Right ventricle myocardium inferior (tissue), 1 donor: ENCODE measurements at regions of chr1 and their contacts with region 1.

Region 1: DNA sequence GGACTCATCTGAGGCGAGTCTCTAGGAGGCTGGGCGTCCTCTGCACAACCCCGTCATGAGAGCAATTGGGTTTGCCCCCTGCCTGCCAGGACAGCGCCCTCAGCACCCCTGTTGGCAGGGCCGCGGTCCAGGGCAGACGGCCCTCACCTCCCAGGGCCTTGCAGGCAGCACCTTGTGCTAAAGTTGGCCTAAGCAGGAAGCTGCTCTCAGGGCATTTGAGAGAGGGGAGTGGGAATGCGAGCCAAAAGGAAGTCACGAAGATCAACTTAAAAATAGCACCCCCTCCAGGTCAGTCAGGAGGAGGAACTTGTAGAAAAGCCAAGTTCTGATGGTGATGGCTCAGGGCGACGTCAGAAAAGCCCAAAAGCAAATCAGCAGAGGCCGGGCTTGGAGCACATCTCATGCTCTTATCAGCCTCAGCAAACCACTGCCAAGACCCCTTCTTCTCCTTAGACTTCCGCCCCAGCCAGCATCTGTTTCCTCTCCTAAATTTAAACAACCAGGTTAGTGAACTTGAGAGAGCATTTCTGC is 12.6 kb upstream of the ADORA3 start:
- DNase-seq: peak; percentile 81
- ATAC-seq: peak; percentile 71

Region 2: DNA sequence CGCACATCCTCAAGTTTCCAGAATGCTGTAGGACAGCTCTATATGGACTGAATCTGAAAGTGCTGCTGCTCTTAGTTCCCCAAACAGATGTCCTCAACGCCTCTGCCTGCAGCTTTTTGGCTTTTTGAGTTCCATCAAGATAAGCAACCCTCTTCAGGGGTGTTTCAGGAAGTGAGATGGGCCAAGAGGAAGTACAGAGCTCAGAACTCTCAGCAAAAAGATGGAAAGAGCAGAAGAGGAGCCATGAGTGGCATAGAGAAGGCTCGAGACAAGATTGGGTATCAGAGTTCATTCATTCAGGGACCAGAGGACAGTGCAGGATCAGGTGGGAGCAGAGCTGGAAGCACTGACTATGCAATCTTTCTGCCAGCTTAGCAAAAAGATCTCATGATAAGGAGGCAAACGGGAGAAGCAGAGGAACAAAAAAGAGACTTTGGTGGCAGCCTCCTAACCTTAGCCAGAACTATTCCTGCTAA is 12.4 kb before region 1 on chr1 and contains the starts of genes ADORA3 and TMIGD3:
- intact Hi-C with region 1: no loop called
- DNase-seq: no peak
- ATAC-seq: no peak
- total RNA-seq, gene ADORA3: 3.8 TPM
- total RNA-seq, gene TMIGD3: 1.7 TPM

Region 3: DNA sequence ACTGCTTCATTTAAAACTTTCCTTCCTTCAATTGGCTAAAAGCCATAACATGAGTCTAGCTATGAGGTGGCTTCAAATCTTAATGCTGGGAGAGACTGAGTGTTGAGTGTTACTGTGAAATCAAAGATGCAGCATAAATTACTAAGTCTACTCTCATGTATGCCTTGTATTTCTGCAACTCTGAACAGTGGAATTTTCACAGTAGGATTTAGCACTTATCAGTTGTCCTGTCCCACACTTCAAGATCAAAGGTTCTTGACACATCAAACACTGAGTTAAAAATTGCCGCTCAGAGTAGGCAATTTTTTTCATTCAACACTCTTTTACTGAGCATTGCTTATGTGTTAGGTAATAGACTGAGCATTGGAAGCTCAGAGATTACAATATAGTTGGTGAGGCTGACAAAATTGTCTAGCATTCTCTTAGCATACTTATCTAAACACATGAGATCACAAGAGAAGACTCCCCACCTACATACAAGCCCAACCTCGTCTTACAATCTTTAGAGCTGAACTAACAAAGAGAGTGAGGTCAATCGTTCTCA is 43.7 kb after region 1 on chr1:
- intact Hi-C with region 1: loop called (anchors 5 kb)
- DNase-seq: no peak
- ATAC-seq: no peak

Region 4: DNA sequence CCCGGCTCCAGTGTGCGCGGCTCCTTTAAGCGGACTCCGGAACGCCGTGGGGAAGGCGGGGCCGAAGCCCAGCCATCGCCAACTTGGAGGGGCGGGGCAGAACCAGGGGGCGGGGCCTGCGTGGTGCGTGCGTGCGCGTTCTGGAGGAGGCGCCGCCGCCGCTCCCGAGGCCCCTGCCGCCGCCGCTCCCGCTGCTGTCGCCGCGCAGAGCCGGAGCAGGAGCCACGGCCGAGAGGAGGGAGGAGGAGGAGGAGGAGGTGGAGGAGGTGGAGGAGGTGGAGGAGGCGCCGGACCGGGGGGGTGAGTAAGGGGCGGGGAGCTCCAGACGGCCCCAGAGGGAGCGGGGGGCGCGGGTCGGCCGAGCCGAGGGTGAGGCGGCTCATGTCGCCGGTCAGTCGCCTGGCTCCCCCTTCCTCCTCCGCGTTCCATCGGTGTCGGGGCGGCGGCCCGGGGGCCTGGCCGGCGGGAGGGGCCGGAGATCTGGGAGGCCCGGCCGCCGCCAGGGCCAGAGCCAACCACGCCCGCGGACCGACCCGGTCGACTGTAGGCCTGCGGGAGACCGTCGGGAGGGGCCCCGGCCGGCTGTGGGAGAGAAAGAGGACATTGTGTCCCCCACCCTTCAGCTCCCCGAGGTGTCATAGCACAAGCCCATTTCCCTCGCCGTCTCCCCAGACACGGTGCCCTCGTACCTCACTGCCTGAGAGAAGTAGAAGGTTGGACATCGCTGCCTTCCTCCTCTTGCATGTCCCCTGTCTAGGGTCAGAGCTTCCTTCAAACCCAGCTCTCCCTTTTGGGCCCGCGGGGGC is 103.8 kb after region 1 on chr1 and contains the start of gene RAP1A:
- intact Hi-C with region 1: loop called (anchors 10 kb)
- DNase-seq: peak; percentile 96
- ATAC-seq: peak; percentile 97
- total RNA-seq, gene RAP1A: 107 TPM